ENCODE measurements at regions of chr19 and their contacts with region 1.

Region 1: GRCh38 chr19:16584248-16585141 is 12.3 kb upstream of the SLC35E1 start:
- DNase-seq: peak; percentile 95
- H3K4me3 Mint-ChIP-seq: peak overlapping the region; percentile 83
- H3K27ac Mint-ChIP-seq: peak overlapping the region; percentile 96
- H3K4me1 Mint-ChIP-seq: peaks cover 92% of the 10 kb centered on the region
- H3K27me3 Mint-ChIP-seq: no peaks in the 10 kb centered on the region

Region 2: DNA sequence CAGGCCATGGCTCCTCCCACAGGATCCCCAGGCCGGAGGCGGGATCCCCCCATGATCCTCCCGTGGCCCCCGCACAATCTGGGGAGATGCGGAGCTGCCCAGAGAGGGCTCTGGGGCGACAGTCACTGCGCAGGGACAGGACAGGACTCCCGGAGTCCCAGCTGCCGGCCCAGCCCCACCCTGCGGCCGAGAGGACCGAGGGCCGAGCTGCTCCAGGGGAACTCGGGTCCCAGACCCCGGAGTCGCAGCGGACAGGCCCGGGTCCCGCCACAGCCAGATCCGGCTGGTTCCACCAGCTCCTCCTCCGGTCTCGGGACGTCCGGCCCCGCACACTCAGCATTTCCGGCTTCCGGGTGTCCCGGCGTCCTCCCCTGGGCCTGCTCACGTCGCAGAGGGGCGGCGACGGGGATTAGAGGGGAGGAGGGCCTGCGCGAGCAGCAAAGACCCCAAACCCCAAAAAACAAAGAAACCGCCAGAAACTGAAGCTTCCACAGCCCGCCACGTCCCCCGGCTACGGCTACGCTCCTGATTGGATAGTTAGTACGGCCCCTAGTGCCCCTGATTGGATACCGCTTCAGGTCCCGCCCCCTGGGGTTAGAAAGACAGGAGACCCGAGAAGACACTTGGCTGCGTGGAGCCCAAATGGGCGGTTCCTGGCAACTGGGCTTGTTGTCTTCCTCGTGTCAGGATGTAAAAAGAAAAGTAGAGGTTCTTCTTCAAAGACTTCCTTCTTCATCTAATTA is 747.7 kb before region 1 on chr19:
- CTCF ChIA-PET with region 1: no interaction called
- POLR2A ChIA-PET with region 1: interaction called, 4 read pairs
- intact Hi-C with region 1: loop called (anchors 10 kb)
- DNase-seq: peak; percentile 97
- H3K4me3 Mint-ChIP-seq: peak overlapping the region; percentile 83
- H3K27ac Mint-ChIP-seq: peak overlapping the region; percentile 95
- H3K4me1 Mint-ChIP-seq: peaks cover 21% of the 10 kb centered on the region
- H3K27me3 Mint-ChIP-seq: no peaks in the 10 kb centered on the region

Region 3: DNA sequence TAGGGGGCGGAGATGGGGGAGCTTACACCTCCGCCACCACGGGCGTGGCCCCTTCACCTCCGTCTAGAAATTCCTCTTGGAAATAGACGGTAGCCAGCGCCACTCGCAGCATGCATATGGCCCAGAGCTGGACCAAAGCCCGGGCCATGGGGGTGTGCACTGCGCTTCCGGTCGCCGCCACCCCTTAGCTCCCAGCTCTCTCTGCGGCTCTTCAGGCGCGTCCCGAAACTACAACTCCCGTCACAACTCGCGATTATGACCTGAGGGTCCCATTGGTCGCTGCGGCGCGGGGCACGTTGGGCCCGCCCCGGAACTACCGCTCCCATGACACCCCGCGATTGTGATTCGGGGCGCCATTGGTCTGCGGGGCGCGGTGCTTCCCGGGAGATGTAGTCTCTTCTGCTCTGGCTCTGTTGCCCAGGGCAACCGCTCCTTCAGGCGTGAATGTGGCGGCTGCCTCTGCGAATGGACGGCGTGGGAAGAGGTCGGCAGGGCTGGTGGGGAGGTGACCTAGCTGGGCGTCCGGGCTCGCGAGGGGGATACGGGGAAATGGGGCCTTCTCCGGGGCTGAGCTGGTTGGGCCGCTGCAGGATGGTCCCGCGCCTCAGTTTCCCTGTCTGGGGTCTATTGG is 88.4 kb before region 1 on chr19 and contains the starts of genes C19orf44 and CALR3:
- CTCF ChIA-PET with region 1: no interaction called
- POLR2A ChIA-PET with region 1: interaction called, 3 read pairs
- intact Hi-C with region 1: loop called (anchors 5 kb)
- DNase-seq: peak; percentile 99
- H3K4me3 Mint-ChIP-seq: peak within 1 kb of the TSS; percentile 93
- H3K27ac Mint-ChIP-seq: peak within 1 kb of the TSS; percentile 74
- H3K4me1 Mint-ChIP-seq: peaks cover 17% of the 10 kb centered on the region
- H3K27me3 Mint-ChIP-seq: no peaks in the 10 kb centered on the region
- total RNA-seq, gene C19orf44: 2.2 to 2.6 TPM
- total RNA-seq, gene CALR3: not detected

Region 4: GRCh38 chr19:16566161-16566560 is 18.3 kb before region 1 on chr19:
- CTCF ChIA-PET with region 1: interaction called, 3 read pairs
- POLR2A ChIA-PET with region 1: interaction called, 3 read pairs
- intact Hi-C with region 1: loop called (anchors 1 kb)
- DNase-seq: peak; percentile 86
- H3K4me3 Mint-ChIP-seq: peak overlapping the region; percentile 55
- H3K27ac Mint-ChIP-seq: peak overlapping the region; percentile 95
- H3K4me1 Mint-ChIP-seq: peaks cover 32% of the 10 kb centered on the region
- H3K27me3 Mint-ChIP-seq: no peaks in the 10 kb centered on the region

Region 5: GRCh38 chr19:16628183-16628983 is 43.9 kb after region 1 on chr19 and contains the start of gene MED26:
- CTCF ChIA-PET with region 1: interaction called, 5 read pairs
- POLR2A ChIA-PET with region 1: interaction called, 47 read pairs
- intact Hi-C with region 1: loop called (anchors 1 kb)
- DNase-seq: peak; percentile 96
- H3K4me3 Mint-ChIP-seq: peak within 1 kb of the TSS; percentile 99
- H3K27ac Mint-ChIP-seq: peak within 1 kb of the TSS; percentile 97
- H3K4me1 Mint-ChIP-seq: peaks cover 36% of the 10 kb centered on the region
- H3K27me3 Mint-ChIP-seq: no peaks in the 10 kb centered on the region
- total RNA-seq, gene MED26: 12.0 to 14.5 TPM